ENCODE measurements at regions of chr2 and their contacts with region 1.

Region 1: DNA sequence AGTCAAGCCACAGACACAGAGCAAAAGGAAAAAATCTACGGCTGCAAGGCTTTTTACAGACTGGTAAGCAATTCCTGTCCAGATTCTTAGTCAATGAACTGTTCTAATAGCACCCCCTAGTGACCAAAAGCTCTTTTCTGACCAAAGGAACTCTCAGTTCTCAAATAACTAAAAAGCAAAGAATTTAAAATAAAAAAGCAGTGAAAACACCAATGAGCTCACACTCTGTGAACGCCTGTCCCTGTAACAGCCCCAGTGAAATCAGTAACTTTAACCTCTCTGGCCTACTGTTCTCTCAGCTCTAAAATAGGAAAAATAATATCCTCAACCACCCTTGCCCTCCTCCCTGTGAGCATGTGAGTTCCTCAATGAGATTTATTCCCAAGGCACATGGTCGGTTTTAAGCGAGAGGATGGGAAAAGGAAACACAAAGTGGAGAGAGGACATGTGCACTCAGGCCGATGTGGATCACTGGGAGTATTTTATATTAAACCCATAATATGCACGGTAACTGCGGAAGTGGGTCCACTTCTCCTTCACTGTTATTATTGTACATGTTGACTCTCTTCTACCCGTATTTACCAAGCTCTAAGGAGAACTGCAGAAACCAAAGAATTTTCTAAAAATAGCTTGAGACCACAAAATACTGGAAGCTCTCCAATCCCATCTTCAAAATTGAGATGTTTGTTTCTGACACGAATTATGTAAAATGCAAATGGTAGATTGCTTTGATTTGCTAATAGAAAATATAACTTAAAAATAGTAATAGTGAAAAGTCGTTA is 128.5 kb downstream of the STK39 start:
- DNase-seq: peak; percentile 74
- H3K4me3 Mint-ChIP-seq: no peak overlapping the region
- H3K27ac Mint-ChIP-seq: no peak overlapping the region
- H3K4me1 Mint-ChIP-seq: no peaks in the 10 kb centered on the region
- H3K27me3 Mint-ChIP-seq: no peaks in the 10 kb centered on the region
- CTCF ChIP-seq: peak; percentile 54

Region 2: GRCh38 chr2:167127135-167127534 is 991.8 kb before region 1 on chr2:
- CTCF ChIA-PET with region 1: interaction called, 7 read pairs
- POLR2A ChIA-PET with region 1: interaction called, 3 read pairs
- intact Hi-C with region 1: loop called (anchors 2 kb)
- DNase-seq: peak; percentile 47
- H3K4me3 Mint-ChIP-seq: no peak overlapping the region
- H3K27ac Mint-ChIP-seq: no peak overlapping the region
- H3K4me1 Mint-ChIP-seq: no peaks in the 10 kb centered on the region
- H3K27me3 Mint-ChIP-seq: peaks cover 10% of the 10 kb centered on the region
- CTCF ChIP-seq: peak; percentile 27

Region 3: GRCh38 chr2:167264380-167264779 is 854.5 kb before region 1 on chr2:
- CTCF ChIA-PET with region 1: interaction called, 77 read pairs
- POLR2A ChIA-PET with region 1: interaction called, 13 read pairs
- intact Hi-C with region 1: loop called (anchors 1 kb)
- DNase-seq: peak; percentile 35
- H3K4me3 Mint-ChIP-seq: no peak overlapping the region
- H3K27ac Mint-ChIP-seq: no peak overlapping the region
- H3K4me1 Mint-ChIP-seq: no peaks in the 10 kb centered on the region
- H3K27me3 Mint-ChIP-seq: peaks cover 49% of the 10 kb centered on the region
- CTCF ChIP-seq: peak; percentile 40

Region 4: GRCh38 chr2:167964650-167965413 is 154.1 kb before region 1 on chr2:
- CTCF ChIA-PET with region 1: interaction called, 83 read pairs
- POLR2A ChIA-PET with region 1: interaction called, 3 read pairs
- intact Hi-C with region 1: loop called (anchors 1 kb)
- DNase-seq: peak; percentile 13
- H3K4me3 Mint-ChIP-seq: no peak overlapping the region
- H3K27ac Mint-ChIP-seq: no peak overlapping the region
- H3K4me1 Mint-ChIP-seq: no peaks in the 10 kb centered on the region
- H3K27me3 Mint-ChIP-seq: no peaks in the 10 kb centered on the region
- CTCF ChIP-seq: peak; percentile 24

Region 5: DNA sequence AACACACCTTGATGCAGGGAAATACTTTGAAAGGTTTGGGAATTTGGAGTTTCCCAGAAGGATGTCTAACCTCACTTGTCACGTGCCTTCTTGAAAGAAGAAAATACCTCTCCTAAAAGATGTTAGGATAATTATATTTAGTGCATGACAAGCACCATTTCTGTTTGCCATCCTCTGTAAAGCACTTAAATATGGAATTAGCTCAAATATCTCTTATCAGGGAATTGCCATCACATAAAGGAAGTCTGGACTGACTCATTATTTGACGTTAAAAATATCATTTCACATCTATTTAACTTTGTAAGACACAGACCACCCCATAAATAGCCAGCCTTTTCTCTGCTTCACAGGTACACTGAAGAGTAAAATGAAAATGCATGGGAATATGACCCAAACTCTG is 11.6 kb before region 1 on chr2:
- CTCF ChIA-PET with region 1: interaction called, 105 read pairs
- POLR2A ChIA-PET with region 1: interaction called, 3 read pairs
- intact Hi-C with region 1: no loop called
- DNase-seq: no peak
- H3K4me3 Mint-ChIP-seq: no peak overlapping the region
- H3K27ac Mint-ChIP-seq: no peak overlapping the region
- H3K4me1 Mint-ChIP-seq: no peaks in the 10 kb centered on the region
- H3K27me3 Mint-ChIP-seq: no peaks in the 10 kb centered on the region
- CTCF ChIP-seq: no peak

Region 6: GRCh38 chr2:168136392-168136977 is 17.6 kb after region 1 on chr2:
- CTCF ChIA-PET with region 1: interaction called, 11 read pairs
- POLR2A ChIA-PET with region 1: no interaction called
- intact Hi-C with region 1: no loop called
- DNase-seq: peak; percentile 49
- H3K4me3 Mint-ChIP-seq: no peak overlapping the region
- H3K27ac Mint-ChIP-seq: no peak overlapping the region
- H3K4me1 Mint-ChIP-seq: peaks cover 10% of the 10 kb centered on the region
- H3K27me3 Mint-ChIP-seq: no peaks in the 10 kb centered on the region
- CTCF ChIP-seq: peak; percentile 54

Measured in MCF 10A (cell line).